ENCODE measurements at regions of chr22 and their contacts with region 1.

Region 1: DNA sequence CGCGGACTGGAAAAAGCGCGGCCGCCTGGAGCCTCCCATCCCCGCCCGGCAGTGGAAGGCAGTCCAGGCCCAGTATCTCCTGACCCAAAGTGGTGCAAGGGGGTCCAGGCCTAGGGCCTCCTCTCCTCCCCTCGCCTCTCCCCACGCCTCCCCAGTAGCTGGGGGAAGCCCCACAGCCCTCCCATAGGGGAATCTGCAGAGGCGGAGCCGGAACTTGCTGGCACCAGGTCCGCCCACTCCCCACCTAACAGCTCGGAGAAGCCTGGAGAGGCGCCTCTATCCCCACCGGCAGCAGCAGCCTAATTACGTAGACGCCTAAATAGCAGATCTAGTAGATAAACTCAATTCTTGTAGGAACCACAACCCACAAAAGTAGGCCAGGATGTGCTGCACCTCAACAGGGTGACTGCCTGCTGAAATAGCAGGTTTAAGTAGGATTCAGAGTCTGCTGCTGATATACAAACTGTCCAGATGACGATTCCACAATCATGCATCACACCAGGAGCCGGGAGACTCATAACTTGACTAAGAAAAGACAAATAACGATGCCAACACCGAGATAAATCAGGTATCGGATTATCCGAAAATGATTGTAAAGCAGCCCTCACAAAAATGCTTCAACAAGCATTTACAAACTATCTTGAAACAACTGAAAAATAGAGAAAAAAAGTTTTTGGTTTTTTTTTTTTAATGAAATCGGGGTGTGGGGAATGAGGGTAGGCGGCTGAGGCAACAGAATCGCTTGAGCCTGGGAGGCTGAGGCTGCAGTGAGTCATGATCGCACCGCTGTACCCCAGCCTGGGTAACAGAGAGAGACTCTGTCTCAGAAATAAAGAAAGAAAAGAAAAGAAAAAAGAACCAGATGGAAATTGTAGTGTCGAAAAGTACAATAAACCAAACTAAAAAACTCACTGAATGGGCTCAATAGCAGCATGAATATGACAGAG is 11.4 kb upstream of the BRD1 start:
- DNase-seq: peak; percentile 75 to 98 (median 84)
- ATAC-seq: peak; percentile 92
- H3K4me3 ChIP-seq: peak overlapping the region; percentile 52
- H3K4me3 Mint-ChIP-seq: peak overlapping the region; percentile 72
- H3K27ac ChIP-seq: peak overlapping the region; percentile 92 to 94
- H3K27ac Mint-ChIP-seq: peak overlapping the region; percentile 93
- H3K4me1 ChIP-seq: peaks cover 30% of the 10 kb centered on the region
- H3K4me1 Mint-ChIP-seq: peaks cover 20% of the 10 kb centered on the region
- H3K27me3 ChIP-seq: no peaks in the 10 kb centered on the region
- H3K27me3 Mint-ChIP-seq: no peaks in the 10 kb centered on the region
- CTCF ChIP-seq: no peak

Region 2: GRCh38 chr22:49812838-49813237 is 26.2 kb before region 1 on chr22:
- CTCF ChIA-PET with region 1: no interaction called
- POLR2A ChIA-PET with region 1: interaction called, 4 read pairs
- intact Hi-C with region 1: loop called in 1 of 2 experiments (anchors 1 kb)
- DNase-seq: peak in 1 of 14 experiments; percentile 17
- ATAC-seq: no peak
- H3K4me3 ChIP-seq: no peak overlapping the region
- H3K4me3 Mint-ChIP-seq: peak overlapping the region; percentile 30
- H3K27ac ChIP-seq: no peak overlapping the region
- H3K27ac Mint-ChIP-seq: peak overlapping the region; percentile 44
- H3K4me1 ChIP-seq: peaks cover 83% of the 10 kb centered on the region
- H3K4me1 Mint-ChIP-seq: peaks cover 88% of the 10 kb centered on the region
- H3K27me3 ChIP-seq: no peaks in the 10 kb centered on the region
- H3K27me3 Mint-ChIP-seq: no peaks in the 10 kb centered on the region
- CTCF ChIP-seq: no peak

Region 3: DNA sequence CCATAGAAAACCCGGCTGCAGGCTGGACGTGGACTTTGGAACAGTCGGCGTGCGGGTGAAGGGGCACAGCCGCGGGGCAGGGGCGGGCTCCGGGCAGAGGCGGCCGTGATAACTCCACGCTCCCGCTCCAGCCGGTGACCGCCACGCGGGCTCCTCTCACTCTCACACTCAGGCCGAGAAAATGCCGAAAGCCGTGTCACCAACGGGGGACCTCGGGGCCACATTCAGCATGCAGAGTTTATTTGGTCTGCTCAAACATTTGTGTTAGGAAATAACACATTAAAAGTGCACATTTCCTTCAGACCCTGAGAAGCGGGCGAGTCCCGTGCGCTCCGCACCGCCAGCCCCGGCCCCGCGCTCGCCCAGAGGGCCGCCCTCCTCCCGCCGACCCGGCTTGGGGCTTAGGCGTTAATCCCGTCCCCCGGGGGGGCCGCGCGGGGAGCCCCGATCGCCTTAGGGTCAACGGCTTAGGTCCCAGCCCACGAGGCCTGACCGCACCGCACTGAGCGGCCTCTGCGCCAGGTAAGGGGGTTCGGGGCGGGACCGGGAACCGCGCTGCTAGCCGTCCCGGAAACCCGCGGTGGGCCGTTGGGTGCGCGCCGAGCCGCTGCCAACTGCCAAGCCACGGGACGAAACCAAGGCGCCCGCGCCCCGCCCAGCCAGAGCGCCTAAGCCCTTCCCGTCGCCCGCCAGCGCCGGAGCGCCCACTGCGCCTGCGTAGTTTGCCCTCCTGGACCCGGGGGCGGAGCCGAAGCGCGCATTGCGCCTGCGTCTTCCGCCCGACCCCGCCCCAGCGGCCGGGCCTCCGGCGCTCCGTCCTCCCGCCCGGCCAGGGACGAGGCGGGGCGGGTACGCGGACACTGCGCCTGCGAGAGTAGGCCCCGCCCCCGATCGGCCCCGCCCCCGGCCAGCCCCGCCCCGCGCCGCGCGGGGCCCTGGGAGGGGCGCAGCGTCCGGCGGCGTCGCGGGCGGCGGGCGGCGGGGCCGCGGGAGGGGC is 14.2 kb after region 1 on chr22 and contains the start of gene ZBED4:
- CTCF ChIA-PET with region 1: no interaction called
- POLR2A ChIA-PET with region 1: interaction called, 13 read pairs
- intact Hi-C with region 1: loop called (anchors 1 kb)
- DNase-seq: peak; percentile 93 to 99 (median 98)
- ATAC-seq: peak; percentile 81
- H3K4me3 ChIP-seq: peak within 1 kb of the TSS; percentile 75
- H3K4me3 Mint-ChIP-seq: peak within 1 kb of the TSS; percentile 97
- H3K27ac ChIP-seq: peak within 1 kb of the TSS; percentile 55 to 88
- H3K27ac Mint-ChIP-seq: peak within 1 kb of the TSS; percentile 96
- H3K4me1 ChIP-seq: peaks cover 66% of the 10 kb centered on the region
- H3K4me1 Mint-ChIP-seq: peaks cover 43% of the 10 kb centered on the region
- H3K27me3 ChIP-seq: no peaks in the 10 kb centered on the region
- H3K27me3 Mint-ChIP-seq: peaks cover 3% of the 10 kb centered on the region
- CTCF ChIP-seq: no peak
- total RNA-seq, gene ZBED4: 14.8 to 15.0 TPM

Region 4: DNA sequence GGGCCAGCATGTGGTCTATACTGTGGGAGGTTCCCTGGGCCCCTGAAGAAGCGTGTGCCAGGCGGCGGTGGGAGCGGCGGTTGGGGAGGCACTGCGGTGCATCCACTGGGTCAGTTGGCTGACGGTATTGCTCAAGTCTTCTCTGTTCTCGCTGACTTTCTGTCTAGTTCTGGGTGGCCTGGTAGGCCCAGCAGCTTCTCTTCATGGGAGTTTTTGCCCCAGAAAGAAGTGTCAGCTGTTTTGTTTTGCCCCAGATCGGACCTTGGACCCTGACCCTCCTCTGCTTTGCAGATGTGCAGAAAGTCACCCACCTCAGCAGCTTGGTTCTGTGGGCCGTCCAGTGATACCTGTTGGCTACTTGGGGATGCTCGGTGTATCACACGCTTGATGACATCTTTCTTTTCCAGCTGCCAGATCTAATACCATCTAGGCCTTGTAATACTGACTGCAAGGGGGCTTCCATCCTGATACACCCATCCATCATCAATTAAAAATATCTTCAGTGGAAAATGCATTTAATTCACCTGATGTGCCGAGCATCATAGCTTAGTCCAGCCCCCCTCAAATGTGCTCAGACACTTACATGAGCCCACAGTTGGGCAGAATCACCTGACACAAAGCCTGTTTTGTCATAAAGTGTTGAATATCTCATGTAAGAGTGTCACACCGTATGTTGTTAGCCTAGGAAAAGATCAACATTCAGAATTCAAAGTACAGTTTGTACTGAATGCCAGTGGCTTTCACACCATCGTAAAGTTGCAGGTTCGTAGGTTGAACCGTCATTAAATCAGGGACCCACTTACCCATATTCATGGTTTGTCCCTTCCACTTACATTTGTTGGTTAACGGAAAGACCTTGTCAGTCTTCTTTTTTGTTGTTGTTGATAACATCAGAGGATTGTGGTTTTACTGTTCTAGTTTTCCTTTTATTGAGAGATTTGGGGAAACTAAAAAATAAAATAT is 28.5 kb after region 1 on chr22:
- CTCF ChIA-PET with region 1: no interaction called
- POLR2A ChIA-PET with region 1: no interaction called
- intact Hi-C with region 1: loop called in 1 of 2 experiments (anchors 1 kb)
- DNase-seq: peak in 3 of 14 experiments; percentile 45 to 74 (median 56)
- ATAC-seq: peak; percentile 45
- H3K4me3 ChIP-seq: no peak overlapping the region
- H3K4me3 Mint-ChIP-seq: peak overlapping the region; percentile 38
- H3K27ac ChIP-seq: peak overlapping the region in 1 of 2 donors; percentile 18
- H3K27ac Mint-ChIP-seq: peak overlapping the region; percentile 80
- H3K4me1 ChIP-seq: peaks cover 59% of the 10 kb centered on the region
- H3K4me1 Mint-ChIP-seq: peaks cover 76% of the 10 kb centered on the region
- H3K27me3 ChIP-seq: no peaks in the 10 kb centered on the region
- H3K27me3 Mint-ChIP-seq: no peaks in the 10 kb centered on the region
- CTCF ChIP-seq: no peak

Region 5: GRCh38 chr22:49930739-49931412 is 91.8 kb after region 1 on chr22:
- CTCF ChIA-PET with region 1: no interaction called
- POLR2A ChIA-PET with region 1: no interaction called
- intact Hi-C with region 1: loop called in 1 of 2 experiments (anchors 5 kb)
- DNase-seq: peak in 12 of 14 experiments; percentile 22 to 83 (median 48)
- ATAC-seq: peak; percentile 37
- H3K4me3 ChIP-seq: no peak overlapping the region
- H3K4me3 Mint-ChIP-seq: peak overlapping the region; percentile 73
- H3K27ac ChIP-seq: peak overlapping the region in 1 of 2 donors; percentile 39
- H3K27ac Mint-ChIP-seq: peak overlapping the region; percentile 89
- H3K4me1 ChIP-seq: peaks cover 60% of the 10 kb centered on the region
- H3K4me1 Mint-ChIP-seq: peaks cover 42% of the 10 kb centered on the region
- H3K27me3 ChIP-seq: no peaks in the 10 kb centered on the region
- H3K27me3 Mint-ChIP-seq: no peaks in the 10 kb centered on the region
- CTCF ChIP-seq: peak; percentile 59

Region 6: GRCh38 chr22:50200461-50201190 is 361.6 kb after region 1 on chr22 and contains the start of gene SELENOO:
- CTCF ChIA-PET with region 1: no interaction called
- POLR2A ChIA-PET with region 1: no interaction called
- intact Hi-C with region 1: loop called in 1 of 2 experiments (anchors 10 kb)
- DNase-seq: peak; percentile 76 to 96 (median 90)
- ATAC-seq: peak; percentile 80
- H3K4me3 ChIP-seq: peak within 1 kb of the TSS; percentile 60
- H3K4me3 Mint-ChIP-seq: peak within 1 kb of the TSS; percentile 91
- H3K27ac ChIP-seq: peak within 1 kb of the TSS in 1 of 2 donors; percentile 40
- H3K27ac Mint-ChIP-seq: peak within 1 kb of the TSS; percentile 85
- H3K4me1 ChIP-seq: peaks cover 27% of the 10 kb centered on the region
- H3K4me1 Mint-ChIP-seq: peaks cover 27% of the 10 kb centered on the region
- H3K27me3 ChIP-seq: no peaks in the 10 kb centered on the region
- H3K27me3 Mint-ChIP-seq: no peaks in the 10 kb centered on the region
- CTCF ChIP-seq: no peak
- total RNA-seq, gene SELENOO: 26.0 to 26.1 TPM